Natural killer cell (primary cell): ENCODE measurements at regions of chr19 and their contacts with region 1.

Region 1: DNA sequence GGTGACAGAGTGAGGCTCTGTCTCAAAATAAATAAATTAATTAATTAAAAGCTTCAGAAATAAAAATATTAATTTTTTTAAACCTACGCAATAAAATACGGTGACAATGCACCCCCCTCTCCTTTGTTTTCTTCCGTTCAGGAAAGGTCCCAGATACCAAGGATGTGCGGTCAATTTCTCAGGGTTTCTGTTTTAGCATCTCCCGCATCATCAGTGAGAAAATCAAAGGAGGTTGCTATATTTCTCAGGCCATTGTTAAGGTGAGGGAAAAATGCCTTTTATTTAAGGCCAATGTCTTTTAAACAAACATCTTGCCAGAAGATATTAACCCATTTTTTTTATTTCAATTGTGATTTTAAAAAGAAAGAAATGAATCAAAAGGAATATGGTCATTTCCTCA is 111.7 kb downstream of the INSR start:
- DNase-seq: no peak
- ATAC-seq: no peak
- H3K4me3 ChIP-seq: no peak overlapping the region
- H3K4me3 Mint-ChIP-seq: peak overlapping the region; percentile 75
- H3K27ac ChIP-seq: peak overlapping the region; percentile 75
- H3K27ac Mint-ChIP-seq: peak overlapping the region; percentile 88 to 92
- H3K4me1 ChIP-seq: peaks cover 52% of the 10 kb centered on the region
- H3K4me1 Mint-ChIP-seq: peaks cover 27 to 39% of the 10 kb centered on the region in 2 donors
- H3K27me3 ChIP-seq: no peaks in the 10 kb centered on the region
- H3K27me3 Mint-ChIP-seq: no peaks in the 10 kb centered on the region
- CTCF ChIP-seq: no peak

Region 2: GRCh38 chr19:7197760-7198696 is 15.5 kb after region 1 on chr19:
- intact Hi-C with region 1: loop called (anchors 1 kb)
- DNase-seq: peak; percentile 92 to 97
- ATAC-seq: peak; percentile 83 to 95 (median 89)
- H3K4me3 ChIP-seq: peak overlapping the region; percentile 85
- H3K4me3 Mint-ChIP-seq: peak overlapping the region; percentile 96
- H3K27ac ChIP-seq: peak overlapping the region; percentile 55
- H3K27ac Mint-ChIP-seq: peak overlapping the region; percentile 92 to 96
- H3K4me1 ChIP-seq: peaks cover 33% of the 10 kb centered on the region
- H3K4me1 Mint-ChIP-seq: peaks cover 16 to 28% of the 10 kb centered on the region in 2 donors
- H3K27me3 ChIP-seq: no peaks in the 10 kb centered on the region
- H3K27me3 Mint-ChIP-seq: peaks cover 0 to 3% of the 10 kb centered on the region in 2 donors
- CTCF ChIP-seq: no peak

Region 3: DNA sequence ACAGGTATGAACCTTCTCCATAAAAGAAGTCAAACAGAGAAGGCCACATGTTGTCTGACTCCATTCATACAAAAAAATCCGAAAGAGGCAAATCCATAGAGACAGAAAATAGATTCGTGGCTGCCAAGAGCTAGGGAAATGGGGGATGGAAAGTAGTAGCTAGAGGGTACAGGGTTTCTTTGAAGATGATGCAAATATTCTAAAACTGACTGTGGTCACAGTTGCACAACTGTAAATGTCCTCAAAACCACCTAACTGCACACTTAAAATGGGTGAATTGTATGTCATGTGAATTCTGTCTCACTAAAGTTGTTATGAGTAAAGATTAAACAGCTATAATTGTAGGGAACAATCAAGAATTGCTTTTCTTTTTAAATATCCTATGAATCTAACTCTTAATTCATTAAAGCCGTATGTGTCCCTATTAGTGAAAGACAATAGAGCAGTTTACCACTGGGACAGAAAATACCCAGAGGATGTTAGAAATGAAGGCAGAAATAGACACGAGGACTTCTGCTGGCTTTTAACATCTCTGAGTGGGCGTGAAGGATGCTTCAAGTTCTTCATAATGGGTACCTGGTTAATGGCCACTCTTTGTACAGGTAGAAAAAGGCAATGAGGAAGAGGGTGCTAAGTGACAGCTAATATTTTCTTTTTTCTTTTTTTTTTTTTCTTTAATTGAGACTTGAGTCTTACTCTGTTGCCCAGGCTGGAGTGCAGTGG is 90.5 kb after region 1 on chr19:
- intact Hi-C with region 1: no loop called
- DNase-seq: no peak
- ATAC-seq: no peak
- H3K4me3 ChIP-seq: no peak overlapping the region
- H3K4me3 Mint-ChIP-seq: no peak overlapping the region
- H3K27ac ChIP-seq: no peak overlapping the region
- H3K27ac Mint-ChIP-seq: no peak overlapping the region
- H3K4me1 ChIP-seq: no peaks in the 10 kb centered on the region
- H3K4me1 Mint-ChIP-seq: peaks cover 8 to 9% of the 10 kb centered on the region in 2 donors
- H3K27me3 ChIP-seq: no peaks in the 10 kb centered on the region
- H3K27me3 Mint-ChIP-seq: peaks cover 0 to 2% of the 10 kb centered on the region in 2 donors
- CTCF ChIP-seq: no peak

Region 4: GRCh38 chr19:7318176-7318575 is 135.7 kb after region 1 on chr19:
- intact Hi-C with region 1: no loop called
- DNase-seq: no peak
- ATAC-seq: no peak
- H3K4me3 ChIP-seq: no peak overlapping the region
- H3K4me3 Mint-ChIP-seq: no peak overlapping the region
- H3K27ac ChIP-seq: no peak overlapping the region
- H3K27ac Mint-ChIP-seq: no peak overlapping the region
- H3K4me1 ChIP-seq: no peaks in the 10 kb centered on the region
- H3K4me1 Mint-ChIP-seq: no peaks in the 10 kb centered on the region
- H3K27me3 ChIP-seq: no peaks in the 10 kb centered on the region
- H3K27me3 Mint-ChIP-seq: peaks cover 0 to 6% of the 10 kb centered on the region in 2 donors
- CTCF ChIP-seq: no peak